ENCODE measurements at regions of chr11 and their contacts with region 1.

Region 1: DNA sequence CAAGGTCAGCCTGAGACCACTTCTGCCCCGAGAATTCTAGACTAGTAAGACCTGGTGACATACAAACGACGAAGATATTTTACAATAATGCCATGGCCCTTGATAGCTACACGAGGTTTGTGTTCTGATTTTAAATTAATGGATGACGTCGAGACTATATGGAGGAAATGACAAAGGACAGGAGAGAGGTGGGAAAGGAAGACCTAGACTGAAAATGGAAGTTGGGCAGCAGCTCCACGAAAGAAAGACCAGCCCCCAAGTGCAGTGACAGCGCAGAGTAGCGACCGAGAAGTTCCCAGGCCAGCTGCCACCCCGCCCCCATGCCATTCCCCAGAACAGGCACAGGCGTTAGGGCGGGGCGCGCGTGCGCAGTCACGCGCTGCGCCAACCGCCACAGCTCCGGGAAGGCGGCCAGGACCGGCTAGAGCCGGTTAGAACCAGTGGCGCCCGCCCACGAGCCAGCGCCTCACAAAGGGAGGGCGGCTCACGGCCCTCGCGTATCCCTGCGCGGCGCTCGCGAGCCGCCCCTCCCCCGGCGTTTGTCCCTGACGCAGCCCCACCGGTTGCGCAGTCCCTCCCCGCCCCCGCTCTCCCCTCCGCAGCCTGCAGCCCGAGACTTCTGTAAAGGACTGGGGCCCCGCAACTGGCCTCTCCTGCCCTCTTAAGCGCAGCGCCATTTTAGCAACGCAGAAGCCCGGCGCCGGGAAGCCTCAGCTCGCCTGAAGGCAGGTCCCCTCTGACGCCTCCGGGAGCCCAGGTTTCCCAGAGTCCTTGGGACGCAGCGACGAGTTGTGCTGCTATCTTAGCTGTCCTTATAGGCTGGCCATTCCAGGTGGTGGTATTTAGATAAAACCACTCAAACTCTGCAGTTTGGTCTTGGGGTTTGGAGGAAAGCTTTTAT is 1.5 kb upstream of the MALAT1 start:
- DNase-seq: peak; percentile 96 to 99 (median 97)
- H3K4me3 ChIP-seq: peak overlapping the region; percentile 97
- H3K4me3 Mint-ChIP-seq: no peak overlapping the region
- H3K27ac ChIP-seq: peak overlapping the region; percentile 95
- H3K27ac Mint-ChIP-seq: no peak overlapping the region
- H3K4me1 ChIP-seq: peaks cover 16% of the 10 kb centered on the region
- H3K4me1 Mint-ChIP-seq: peaks cover 13 to 30% (median 14%) of the 10 kb centered on the region in 3 donors
- H3K27me3 ChIP-seq: no peaks in the 10 kb centered on the region
- H3K27me3 Mint-ChIP-seq: peaks cover 0 to 3% of the 10 kb centered on the region in 2 donors

Region 2: DNA sequence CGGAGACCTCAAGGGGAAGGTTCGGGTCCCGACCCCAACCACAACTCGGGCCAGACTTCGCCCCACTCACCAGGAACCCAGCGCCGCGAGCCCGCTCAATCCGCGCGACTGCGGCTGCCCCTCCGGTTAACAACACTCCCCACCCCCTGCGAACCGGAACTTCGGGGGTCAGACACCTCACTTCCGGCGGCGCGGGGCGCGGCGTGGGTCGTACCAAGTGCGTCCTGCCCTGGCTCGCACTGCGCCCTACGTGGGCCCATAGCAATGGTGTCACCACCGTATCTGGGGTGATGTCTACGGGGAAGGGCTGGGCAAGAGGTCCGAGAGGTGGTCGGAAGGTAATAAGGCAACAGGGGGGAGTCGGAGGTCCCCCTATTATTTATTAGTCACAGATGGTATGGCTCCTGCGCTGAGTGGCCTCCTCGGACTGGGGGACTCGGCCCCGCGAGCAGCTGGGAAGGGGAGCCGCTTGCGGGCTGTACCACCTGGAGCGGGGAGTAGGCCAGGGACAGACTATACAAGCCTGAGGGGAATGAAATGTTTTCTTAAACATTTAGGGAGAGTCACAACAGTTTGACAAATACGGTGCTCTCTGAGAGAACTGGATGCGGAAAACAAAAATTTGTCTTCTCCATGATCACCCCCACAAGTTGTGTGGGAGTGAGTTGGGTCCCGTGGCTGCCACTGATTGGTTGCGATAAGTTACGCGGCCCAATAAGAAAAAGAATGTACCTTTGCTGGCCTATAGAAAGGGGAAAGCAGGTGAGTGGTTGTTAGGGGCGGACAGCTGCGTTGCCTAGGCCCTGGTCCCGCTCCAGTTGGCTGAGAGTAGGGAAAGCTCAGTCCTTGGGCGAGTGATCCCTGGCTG is 362.8 kb before region 1 on chr11 and contains the start of gene SYVN1:
- CTCF ChIA-PET with region 1: no interaction called
- POLR2A ChIA-PET with region 1: interaction called, 12 read pairs
- DNase-seq: peak; percentile 86 to 95 (median 91)
- H3K4me3 ChIP-seq: peak within 1 kb of the TSS; percentile 99
- H3K4me3 Mint-ChIP-seq: peak within 1 kb of the TSS; percentile 94 to 100 (median 98)
- H3K27ac ChIP-seq: peak within 1 kb of the TSS; percentile 100
- H3K27ac Mint-ChIP-seq: peak within 1 kb of the TSS; percentile 98 to 100 (median 100)
- H3K4me1 ChIP-seq: peaks cover 31% of the 10 kb centered on the region
- H3K4me1 Mint-ChIP-seq: peaks cover 35 to 52% (median 36%) of the 10 kb centered on the region in 3 donors
- H3K27me3 ChIP-seq: no peaks in the 10 kb centered on the region
- H3K27me3 Mint-ChIP-seq: peaks cover 0 to 4% of the 10 kb centered on the region in 2 donors
- total RNA-seq, gene SYVN1: 35.1 to 39.7 TPM

Region 3: DNA sequence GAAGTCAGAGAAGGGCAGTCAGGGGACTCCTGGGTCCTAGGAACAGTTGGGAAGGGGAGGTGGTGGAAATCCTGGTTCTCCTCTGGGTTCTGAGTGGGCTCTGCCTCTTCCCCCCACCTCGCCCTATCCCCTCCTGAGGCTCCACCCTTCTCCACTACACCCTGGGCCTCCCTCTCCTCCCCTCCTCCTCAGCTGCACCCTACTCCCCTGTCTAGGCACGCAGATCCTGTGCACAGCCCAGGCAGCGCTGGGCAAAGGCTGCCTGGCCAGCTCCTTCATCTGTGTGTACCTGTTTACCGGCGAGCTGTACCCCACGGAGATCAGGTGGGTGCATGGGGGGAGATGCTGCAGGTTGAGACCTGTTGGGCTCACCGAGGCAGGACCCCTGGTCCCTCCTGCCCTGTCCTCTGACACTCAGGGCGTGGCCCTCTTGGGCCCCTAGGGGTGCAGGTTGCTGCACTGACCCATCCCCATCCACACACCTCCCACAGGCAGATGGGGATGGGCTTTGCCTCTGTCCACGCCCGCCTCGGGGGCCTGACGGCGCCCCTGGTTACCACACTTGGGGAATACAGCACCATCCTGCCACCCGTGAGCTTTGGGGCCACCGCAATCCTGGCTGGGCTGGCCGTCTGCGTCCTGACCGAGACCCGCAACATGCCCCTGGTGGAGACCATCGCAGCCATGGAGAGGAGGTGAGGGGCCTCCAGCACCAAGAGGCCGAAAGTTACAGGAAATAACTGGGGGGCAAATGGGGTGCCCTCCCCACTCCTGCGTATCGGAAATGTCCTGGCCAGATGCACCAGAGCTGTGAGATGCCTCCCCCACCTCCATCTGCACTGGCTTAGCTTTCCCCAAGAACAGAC is 261.0 kb before region 1 on chr11:
- CTCF ChIA-PET with region 1: no interaction called
- POLR2A ChIA-PET with region 1: no interaction called
- DNase-seq: no peak
- H3K4me3 ChIP-seq: no peak overlapping the region
- H3K4me3 Mint-ChIP-seq: peak overlapping the region in 1 of 7 donors; percentile 69
- H3K27ac ChIP-seq: no peak overlapping the region
- H3K27ac Mint-ChIP-seq: peak overlapping the region in 2 of 8 donors; percentile 17 to 91
- H3K4me1 ChIP-seq: no peaks in the 10 kb centered on the region
- H3K4me1 Mint-ChIP-seq: no peaks in the 10 kb centered on the region
- H3K27me3 ChIP-seq: no peaks in the 10 kb centered on the region
- H3K27me3 Mint-ChIP-seq: peaks cover 0 to 4% of the 10 kb centered on the region in 2 donors

Region 4: GRCh38 chr11:65382033-65382807 is 115.2 kb before region 1 on chr11 and contains the start of gene SLC25A45:
- CTCF ChIA-PET with region 1: interaction called, 11 read pairs
- POLR2A ChIA-PET with region 1: interaction called, 56 read pairs
- DNase-seq: peak; percentile 84 to 96 (median 87)
- H3K4me3 ChIP-seq: peak within 1 kb of the TSS; percentile 91
- H3K4me3 Mint-ChIP-seq: peak within 1 kb of the TSS; percentile 83 to 94 (median 91)
- H3K27ac ChIP-seq: peak within 1 kb of the TSS; percentile 96
- H3K27ac Mint-ChIP-seq: peak within 1 kb of the TSS; percentile 97 to 100 (median 99)
- H3K4me1 ChIP-seq: peaks cover 54% of the 10 kb centered on the region
- H3K4me1 Mint-ChIP-seq: peaks cover 45 to 61% (median 47%) of the 10 kb centered on the region in 3 donors
- H3K27me3 ChIP-seq: no peaks in the 10 kb centered on the region
- H3K27me3 Mint-ChIP-seq: no peaks in the 10 kb centered on the region
- total RNA-seq, gene SLC25A45: 13.3 to 13.8 TPM

Region 5: DNA sequence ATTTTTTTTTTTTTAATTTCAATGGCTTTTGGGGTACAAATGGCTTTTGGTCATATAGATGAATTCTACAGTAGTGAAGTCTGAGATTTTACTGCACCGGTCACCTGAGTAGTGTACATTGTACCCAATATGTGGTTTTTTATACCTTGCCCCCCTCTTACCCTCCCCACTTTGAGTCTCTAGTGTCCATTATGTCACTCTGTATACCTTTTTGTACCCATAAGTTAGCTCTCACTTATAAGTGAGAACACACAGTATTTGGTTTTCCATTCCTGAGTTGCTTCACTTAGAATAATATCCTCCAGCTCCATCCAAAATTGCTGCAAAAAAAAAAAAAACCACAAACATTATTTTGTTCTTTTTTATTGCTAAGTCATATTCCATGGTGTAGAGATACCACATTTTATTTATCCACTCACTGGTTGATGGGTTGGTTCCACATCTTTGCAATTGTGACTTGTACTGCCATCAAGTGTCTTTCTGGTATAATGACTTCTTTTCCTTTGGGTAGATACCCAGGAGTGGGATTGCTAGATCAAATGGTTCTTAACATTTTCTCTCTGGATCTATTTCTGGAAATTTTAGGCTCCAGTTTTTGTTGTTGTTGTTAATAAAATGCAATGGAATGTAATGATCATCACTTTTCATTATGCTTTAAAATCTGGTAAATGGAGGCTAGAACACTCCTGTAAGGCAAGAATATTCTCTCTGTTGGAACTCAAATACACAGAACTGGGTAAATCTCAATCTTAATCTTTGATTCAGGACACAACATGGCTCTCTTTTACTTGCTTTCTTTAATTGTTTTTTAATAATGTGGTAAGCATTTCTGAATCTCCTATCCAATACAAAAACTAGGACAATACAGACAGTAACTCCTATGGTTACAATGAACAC is 64.5 kb before region 1 on chr11:
- CTCF ChIA-PET with region 1: interaction called, 9 read pairs
- POLR2A ChIA-PET with region 1: interaction called, 1,366 read pairs
- DNase-seq: peak in 3 of 5 donors; percentile 30 to 68 (median 55)
- H3K4me3 ChIP-seq: no peak overlapping the region
- H3K4me3 Mint-ChIP-seq: peak overlapping the region in 3 of 7 donors; percentile 51 to 70 (median 63)
- H3K27ac ChIP-seq: no peak overlapping the region
- H3K27ac Mint-ChIP-seq: peak overlapping the region; percentile 4 to 98 (median 86)
- H3K4me1 ChIP-seq: peaks cover 61% of the 10 kb centered on the region
- H3K4me1 Mint-ChIP-seq: peaks cover 82 to 96% (median 95%) of the 10 kb centered on the region in 3 donors
- H3K27me3 ChIP-seq: no peaks in the 10 kb centered on the region
- H3K27me3 Mint-ChIP-seq: no peaks in the 10 kb centered on the region

Region 6: GRCh38 chr11:65471410-65471762 is 26.0 kb before region 1 on chr11:
- CTCF ChIA-PET with region 1: interaction called, 132 read pairs
- POLR2A ChIA-PET with region 1: interaction called, 171 read pairs
- DNase-seq: peak in 1 of 5 donors; percentile 21
- H3K4me3 ChIP-seq: peak overlapping the region; percentile 25
- H3K4me3 Mint-ChIP-seq: peak overlapping the region in 1 of 7 donors; percentile 73
- H3K27ac ChIP-seq: peak overlapping the region; percentile 73
- H3K27ac Mint-ChIP-seq: peak overlapping the region; percentile 96 to 99 (median 98)
- H3K4me1 ChIP-seq: peaks cover 21% of the 10 kb centered on the region
- H3K4me1 Mint-ChIP-seq: peaks cover 16 to 33% (median 20%) of the 10 kb centered on the region in 3 donors
- H3K27me3 ChIP-seq: no peaks in the 10 kb centered on the region
- H3K27me3 Mint-ChIP-seq: no peaks in the 10 kb centered on the region

Region 7: GRCh38 chr11:65477149-65477965 is 20.0 kb before region 1 on chr11:
- CTCF ChIA-PET with region 1: interaction called, 132 read pairs
- POLR2A ChIA-PET with region 1: interaction called, 171 read pairs
- DNase-seq: peak; percentile 82 to 94 (median 86)
- H3K4me3 ChIP-seq: peak overlapping the region; percentile 86
- H3K4me3 Mint-ChIP-seq: peak overlapping the region; percentile 90 to 100 (median 97)
- H3K27ac ChIP-seq: peak overlapping the region; percentile 98
- H3K27ac Mint-ChIP-seq: peak overlapping the region; percentile 96 to 100 (median 100)
- H3K4me1 ChIP-seq: peaks cover 12% of the 10 kb centered on the region
- H3K4me1 Mint-ChIP-seq: peaks cover 12 to 27% (median 14%) of the 10 kb centered on the region in 3 donors
- H3K27me3 ChIP-seq: no peaks in the 10 kb centered on the region
- H3K27me3 Mint-ChIP-seq: no peaks in the 10 kb centered on the region

Region 8: GRCh38 chr11:65524741-65525545 is 27.6 kb after region 1 on chr11 and contains the start of gene SCYL1:
- CTCF ChIA-PET with region 1: interaction called, 4 read pairs
- POLR2A ChIA-PET with region 1: interaction called, 12 read pairs
- DNase-seq: peak; percentile 72 to 88 (median 76)
- H3K4me3 ChIP-seq: peak within 1 kb of the TSS; percentile 75
- H3K4me3 Mint-ChIP-seq: peak within 1 kb of the TSS; percentile 81 to 91 (median 85)
- H3K27ac ChIP-seq: peak within 1 kb of the TSS; percentile 76
- H3K27ac Mint-ChIP-seq: peak within 1 kb of the TSS; percentile 73 to 97 (median 92)
- H3K4me1 ChIP-seq: peaks cover 52% of the 10 kb centered on the region
- H3K4me1 Mint-ChIP-seq: peaks cover 45 to 62% (median 46%) of the 10 kb centered on the region in 3 donors
- H3K27me3 ChIP-seq: no peaks in the 10 kb centered on the region
- H3K27me3 Mint-ChIP-seq: peaks cover 0 to 1% of the 10 kb centered on the region in 2 donors
- total RNA-seq, gene SCYL1: 85.1 to 88.5 TPM

Measured in CD8-positive, alpha-beta memory T cell (primary cell).